ENCODE measurements at regions of chr21 and their contacts with region 1.

Region 1: GRCh38 chr21:33324291-33325221 is at the start of gene IFNAR1:
- DNase-seq: peak; percentile 98 to 100 (median 99)
- ATAC-seq: peak; percentile 92
- H3K4me3 ChIP-seq: peak within 1 kb of the TSS; percentile 80 to 92
- H3K4me3 Mint-ChIP-seq: no peak within 1 kb of the TSS
- H3K27ac ChIP-seq: peak within 1 kb of the TSS; percentile 88 to 92
- H3K27ac Mint-ChIP-seq: no peak within 1 kb of the TSS
- H3K4me1 ChIP-seq: peaks cover 31% of the 10 kb centered on the region
- H3K4me1 Mint-ChIP-seq: peaks cover 30% of the 10 kb centered on the region
- H3K27me3 ChIP-seq: no peaks in the 10 kb centered on the region
- H3K27me3 Mint-ChIP-seq: no peaks in the 10 kb centered on the region
- CTCF ChIP-seq: no peak
- total RNA-seq, gene IFNAR1: 15.1 to 18.6 TPM

Region 2: GRCh38 chr21:33229784-33230544 is 94.6 kb before region 1 on chr21 and contains the start of gene IFNAR2:
- CTCF ChIA-PET with region 1: no interaction called
- POLR2A ChIA-PET with region 1: interaction called, 6 read pairs
- intact Hi-C with region 1: loop called (anchors 1 to 2 kb)
- DNase-seq: peak; percentile 56 to 85 (median 74)
- ATAC-seq: peak; percentile 86
- H3K4me3 ChIP-seq: peak within 1 kb of the TSS; percentile 90 to 97
- H3K4me3 Mint-ChIP-seq: peak within 1 kb of the TSS; percentile 92
- H3K27ac ChIP-seq: peak within 1 kb of the TSS; percentile 74 to 75
- H3K27ac Mint-ChIP-seq: peak within 1 kb of the TSS; percentile 95
- H3K4me1 ChIP-seq: peaks cover 46% of the 10 kb centered on the region
- H3K4me1 Mint-ChIP-seq: peaks cover 51% of the 10 kb centered on the region
- H3K27me3 ChIP-seq: no peaks in the 10 kb centered on the region
- H3K27me3 Mint-ChIP-seq: no peaks in the 10 kb centered on the region
- CTCF ChIP-seq: no peak
- total RNA-seq, gene IFNAR2: 21.9 to 30.0 TPM

Region 3: GRCh38 chr21:33278721-33279120 is 45.8 kb before region 1 on chr21:
- CTCF ChIA-PET with region 1: no interaction called
- POLR2A ChIA-PET with region 1: no interaction called
- intact Hi-C with region 1: loop called in 1 of 2 experiments (anchors 1 kb)
- DNase-seq: no peak
- ATAC-seq: no peak
- H3K4me3 ChIP-seq: no peak overlapping the region
- H3K4me3 Mint-ChIP-seq: no peak overlapping the region
- H3K27ac ChIP-seq: no peak overlapping the region
- H3K27ac Mint-ChIP-seq: no peak overlapping the region
- H3K4me1 ChIP-seq: no peaks in the 10 kb centered on the region
- H3K4me1 Mint-ChIP-seq: peaks cover 20% of the 10 kb centered on the region
- H3K27me3 ChIP-seq: no peaks in the 10 kb centered on the region
- H3K27me3 Mint-ChIP-seq: no peaks in the 10 kb centered on the region
- CTCF ChIP-seq: no peak

Region 4: DNA sequence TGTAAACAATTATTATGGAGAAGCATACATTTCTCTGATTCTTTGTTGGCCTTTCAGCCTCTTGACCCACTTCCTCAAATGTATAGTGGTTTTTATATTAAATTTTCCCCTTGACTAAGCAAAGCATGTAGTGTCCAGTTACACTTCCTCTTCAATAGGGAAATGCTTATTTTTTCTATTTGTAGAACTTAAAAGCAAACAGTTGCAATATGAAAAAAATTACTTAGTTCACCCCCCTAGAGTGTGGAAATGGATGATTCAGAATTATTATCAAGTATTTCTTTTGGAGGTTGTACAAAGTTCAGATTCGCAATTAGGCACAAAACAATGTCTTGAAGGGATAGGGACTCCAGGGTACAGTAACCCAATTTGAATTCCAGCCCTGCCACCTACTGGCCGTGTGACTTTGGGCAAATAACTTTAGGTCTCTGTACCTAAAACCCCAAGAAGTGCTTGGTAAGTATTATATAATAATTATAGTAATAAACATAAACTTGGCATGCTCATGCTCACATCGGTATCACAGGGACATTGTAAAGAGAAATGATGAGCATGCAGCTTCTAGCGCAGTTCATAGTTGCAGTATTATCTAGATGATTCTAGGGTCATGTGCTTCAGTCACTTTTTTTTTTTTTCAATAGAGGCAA is 50.0 kb after region 1 on chr21:
- CTCF ChIA-PET with region 1: interaction called, 3 read pairs
- POLR2A ChIA-PET with region 1: interaction called, 6 read pairs
- intact Hi-C with region 1: loop called in 1 of 2 experiments (anchors 1 kb)
- DNase-seq: peak in 7 of 9 experiments; percentile 38 to 75 (median 67)
- ATAC-seq: peak; percentile 85
- H3K4me3 ChIP-seq: no peak overlapping the region
- H3K4me3 Mint-ChIP-seq: no peak overlapping the region
- H3K27ac ChIP-seq: no peak overlapping the region
- H3K27ac Mint-ChIP-seq: no peak overlapping the region
- H3K4me1 ChIP-seq: peaks cover 9% of the 10 kb centered on the region
- H3K4me1 Mint-ChIP-seq: peaks cover 12% of the 10 kb centered on the region
- H3K27me3 ChIP-seq: peaks cover 0 to 13% of the 10 kb centered on the region in 2 experiments
- H3K27me3 Mint-ChIP-seq: peaks cover 3% of the 10 kb centered on the region
- CTCF ChIP-seq: peak; percentile 66

Region 5: GRCh38 chr21:33386222-33386784 is 61.7 kb after region 1 on chr21:
- CTCF ChIA-PET with region 1: interaction called, 3 read pairs
- POLR2A ChIA-PET with region 1: interaction called, 10 read pairs
- intact Hi-C with region 1: loop called in 1 of 2 experiments (anchors 5 kb)
- DNase-seq: peak in 1 of 9 experiments; percentile 19
- ATAC-seq: no peak
- H3K4me3 ChIP-seq: no peak overlapping the region
- H3K4me3 Mint-ChIP-seq: no peak overlapping the region
- H3K27ac ChIP-seq: no peak overlapping the region
- H3K27ac Mint-ChIP-seq: no peak overlapping the region
- H3K4me1 ChIP-seq: peaks cover 42% of the 10 kb centered on the region
- H3K4me1 Mint-ChIP-seq: peaks cover 46% of the 10 kb centered on the region
- H3K27me3 ChIP-seq: peaks cover 0 to 33% of the 10 kb centered on the region in 2 experiments
- H3K27me3 Mint-ChIP-seq: peaks cover 3% of the 10 kb centered on the region
- CTCF ChIP-seq: no peak

Region 6: GRCh38 chr21:33491373-33492102 is 167.0 kb after region 1 on chr21 and contains the start of gene DNAJC28:
- CTCF ChIA-PET with region 1: no interaction called
- POLR2A ChIA-PET with region 1: interaction called, 4 read pairs
- intact Hi-C with region 1: loop called in 1 of 2 experiments (anchors 5 kb)
- DNase-seq: peak; percentile 87 to 98 (median 95)
- ATAC-seq: peak; percentile 97
- H3K4me3 ChIP-seq: peak within 1 kb of the TSS; percentile 81 to 95
- H3K4me3 Mint-ChIP-seq: peak within 1 kb of the TSS; percentile 92
- H3K27ac ChIP-seq: peak within 1 kb of the TSS; percentile 60 to 73
- H3K27ac Mint-ChIP-seq: peak within 1 kb of the TSS; percentile 94
- H3K4me1 ChIP-seq: peaks cover 9% of the 10 kb centered on the region
- H3K4me1 Mint-ChIP-seq: peaks cover 11% of the 10 kb centered on the region
- H3K27me3 ChIP-seq: no peaks in the 10 kb centered on the region
- H3K27me3 Mint-ChIP-seq: no peaks in the 10 kb centered on the region
- CTCF ChIP-seq: no peak
- total RNA-seq, gene DNAJC28: 0.22 to 0.33 TPM

Measured in CD8-positive, alpha-beta T cell (primary cell).